ENCODE measurements at regions of chr12 and their contacts with region 1.

Region 1: DNA sequence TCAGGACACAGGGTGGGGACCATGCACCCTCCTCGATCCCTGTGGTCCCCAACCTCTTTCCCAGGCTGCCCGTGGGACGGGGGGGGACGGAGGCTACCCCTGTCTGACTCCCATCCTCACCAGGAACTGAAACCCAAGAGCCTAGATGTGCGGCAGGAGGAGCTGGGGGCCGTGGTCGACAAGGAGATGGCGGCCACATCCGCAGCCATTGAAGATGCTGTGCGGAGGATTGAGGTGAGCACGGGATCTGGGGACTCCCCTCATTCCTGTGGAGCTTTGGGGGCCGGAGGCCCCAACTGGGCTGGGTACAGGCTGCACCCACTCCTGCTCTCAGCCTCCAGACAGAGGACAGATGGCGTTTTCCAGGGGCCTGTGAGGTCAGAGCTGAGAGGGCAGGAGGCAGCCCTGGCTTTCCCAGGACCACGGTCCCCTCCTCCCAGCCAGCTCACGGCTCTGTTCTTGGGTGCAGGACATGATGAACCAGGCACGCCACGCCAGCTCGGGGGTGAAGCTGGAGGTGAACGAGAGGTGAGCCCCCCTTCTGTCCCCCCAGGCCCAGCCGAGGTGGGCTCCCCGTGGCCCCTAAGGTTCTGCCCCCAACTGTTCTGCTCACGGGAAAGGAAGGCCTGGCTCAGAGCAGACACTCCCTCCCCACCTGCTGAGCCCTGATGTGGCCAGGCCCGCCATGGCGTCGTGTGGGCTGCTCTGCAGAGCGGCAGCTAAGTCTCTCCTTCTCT is 24.2 kb downstream of the HIP1R start:
- DNase-seq: no peak
- H3K4me3 ChIP-seq: no peak overlapping the region
- H3K27ac ChIP-seq: no peak overlapping the region
- H3K4me1 ChIP-seq: peaks cover 32% of the 10 kb centered on the region
- H3K27me3 ChIP-seq: no peaks in the 10 kb centered on the region
- CTCF ChIP-seq: no peak
- POLR2A ChIP-seq: no peak

Region 2: DNA sequence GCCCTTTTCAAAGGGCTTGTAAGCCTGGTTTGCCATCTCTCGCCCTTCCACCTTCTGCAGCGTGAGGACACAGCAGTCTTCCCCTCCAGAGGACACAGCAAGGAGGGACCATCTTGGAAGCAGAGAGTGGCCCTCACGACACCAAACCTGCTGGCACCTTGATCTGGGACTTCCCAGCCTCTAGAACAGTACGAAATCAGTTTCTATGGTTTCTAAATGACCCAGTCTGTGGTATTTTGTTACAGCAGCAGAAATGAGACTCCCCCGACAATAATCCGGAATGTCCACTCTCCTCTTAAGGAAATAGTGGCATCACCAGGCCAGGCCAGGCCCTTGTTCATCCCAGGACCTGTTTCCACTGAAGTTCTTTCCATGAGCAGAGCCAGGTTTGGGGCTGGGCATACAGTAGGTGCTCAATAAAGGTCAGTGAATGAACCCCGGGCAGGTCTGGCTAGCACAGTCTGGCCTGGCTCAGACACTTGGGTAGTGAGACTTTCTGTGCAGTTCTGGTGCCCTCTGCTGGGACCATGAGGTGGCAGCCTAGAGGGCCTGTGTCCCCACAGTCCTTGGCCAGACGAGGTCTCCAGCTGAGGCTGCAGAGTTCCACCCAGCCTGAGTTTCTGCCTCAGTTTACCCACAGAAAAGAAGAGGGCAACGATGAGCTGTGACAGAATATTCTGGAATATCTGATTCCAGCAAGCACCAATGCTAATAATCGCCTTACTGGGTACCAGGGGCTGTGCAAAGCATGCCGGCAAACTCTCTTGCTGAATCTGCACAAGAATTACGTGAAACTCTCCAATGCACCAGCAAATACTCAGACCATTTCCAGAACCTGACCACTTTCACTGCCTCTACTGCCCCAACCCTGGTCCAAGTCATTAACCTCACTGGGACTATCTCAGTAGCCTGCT is 92.8 kb after region 1 on chr12:
- intact Hi-C with region 1: loop called (anchors 2 kb)
- DNase-seq: no peak
- H3K4me3 ChIP-seq: no peak overlapping the region
- H3K27ac ChIP-seq: peak overlapping the region; percentile 5
- H3K4me1 ChIP-seq: peaks cover 10% of the 10 kb centered on the region
- H3K27me3 ChIP-seq: no peaks in the 10 kb centered on the region
- CTCF ChIP-seq: peak; percentile 74 to 90 (median 87)
- POLR2A ChIP-seq: no peak

Region 3: GRCh38 chr12:123150744-123151456 is 291.4 kb after region 1 on chr12 and contains the start of gene PITPNM2:
- intact Hi-C with region 1: no loop called
- DNase-seq: peak in 1 of 2 donors; percentile 49
- H3K4me3 ChIP-seq: peak within 1 kb of the TSS; percentile 77 to 90
- H3K27ac ChIP-seq: peak within 1 kb of the TSS; percentile 94
- H3K4me1 ChIP-seq: peaks cover 30% of the 10 kb centered on the region
- H3K27me3 ChIP-seq: no peaks in the 10 kb centered on the region
- CTCF ChIP-seq: peak in 1 of 3 experiments; percentile 18
- POLR2A ChIP-seq: no peak
- total RNA-seq, gene PITPNM2: 8.1 TPM

Measured in vagina (tissue), 2 donors.